Common myeloid progenitor, CD34-positive (primary cell): ENCODE measurements at regions of chr2 and their contacts with region 1.

Region 1: GRCh38 chr2:6934758-6935651 is 17.8 kb downstream of the RNF144A start:
- DNase-seq: no peak
- H3K4me3 ChIP-seq: peak overlapping the region in 3 of 7 experiments; percentile 19 to 48 (median 35)
- H3K27ac ChIP-seq: peak overlapping the region; percentile 48 to 83
- H3K4me1 ChIP-seq: peaks cover 25 to 65% (median 53%) of the 10 kb centered on the region in 4 experiments
- H3K27me3 ChIP-seq: no peaks in the 10 kb centered on the region

Region 2: GRCh38 chr2:6516674-6517073 is 418.3 kb before region 1 on chr2:
- CTCF ChIA-PET with region 1: no interaction called
- POLR2A ChIA-PET with region 1: no interaction called
- DNase-seq: no peak
- H3K4me3 ChIP-seq: no peak overlapping the region
- H3K27ac ChIP-seq: no peak overlapping the region
- H3K4me1 ChIP-seq: no peaks in the 10 kb centered on the region
- H3K27me3 ChIP-seq: peaks cover 0 to 2% (median 0%) of the 10 kb centered on the region in 5 experiments

Region 3: GRCh38 chr2:6741239-6741638 is 193.8 kb before region 1 on chr2:
- CTCF ChIA-PET with region 1: no interaction called
- POLR2A ChIA-PET with region 1: no interaction called
- DNase-seq: no peak
- H3K4me3 ChIP-seq: no peak overlapping the region
- H3K27ac ChIP-seq: no peak overlapping the region
- H3K4me1 ChIP-seq: no peaks in the 10 kb centered on the region
- H3K27me3 ChIP-seq: peaks cover 0 to 6% (median 0%) of the 10 kb centered on the region in 5 experiments

Region 4: GRCh38 chr2:6917071-6917760 is 17.8 kb before region 1 on chr2 and contains the start of gene RNF144A:
- CTCF ChIA-PET with region 1: interaction called, 31 read pairs
- POLR2A ChIA-PET with region 1: no interaction called
- DNase-seq: peak; percentile 53 to 81 (median 78)
- H3K4me3 ChIP-seq: peak within 1 kb of the TSS; percentile 64 to 87 (median 79)
- H3K27ac ChIP-seq: no peak within 1 kb of the TSS
- H3K4me1 ChIP-seq: peaks cover 2 to 32% (median 24%) of the 10 kb centered on the region in 4 experiments
- H3K27me3 ChIP-seq: no peaks in the 10 kb centered on the region

Region 5: GRCh38 chr2:6922201-6922685 is 12.8 kb before region 1 on chr2:
- CTCF ChIA-PET with region 1: interaction called, 31 read pairs
- POLR2A ChIA-PET with region 1: no interaction called
- DNase-seq: peak in 2 of 3 donors; percentile 67
- H3K4me3 ChIP-seq: no peak overlapping the region
- H3K27ac ChIP-seq: no peak overlapping the region
- H3K4me1 ChIP-seq: peaks cover 2 to 62% (median 54%) of the 10 kb centered on the region in 4 experiments
- H3K27me3 ChIP-seq: no peaks in the 10 kb centered on the region

Region 6: DNA sequence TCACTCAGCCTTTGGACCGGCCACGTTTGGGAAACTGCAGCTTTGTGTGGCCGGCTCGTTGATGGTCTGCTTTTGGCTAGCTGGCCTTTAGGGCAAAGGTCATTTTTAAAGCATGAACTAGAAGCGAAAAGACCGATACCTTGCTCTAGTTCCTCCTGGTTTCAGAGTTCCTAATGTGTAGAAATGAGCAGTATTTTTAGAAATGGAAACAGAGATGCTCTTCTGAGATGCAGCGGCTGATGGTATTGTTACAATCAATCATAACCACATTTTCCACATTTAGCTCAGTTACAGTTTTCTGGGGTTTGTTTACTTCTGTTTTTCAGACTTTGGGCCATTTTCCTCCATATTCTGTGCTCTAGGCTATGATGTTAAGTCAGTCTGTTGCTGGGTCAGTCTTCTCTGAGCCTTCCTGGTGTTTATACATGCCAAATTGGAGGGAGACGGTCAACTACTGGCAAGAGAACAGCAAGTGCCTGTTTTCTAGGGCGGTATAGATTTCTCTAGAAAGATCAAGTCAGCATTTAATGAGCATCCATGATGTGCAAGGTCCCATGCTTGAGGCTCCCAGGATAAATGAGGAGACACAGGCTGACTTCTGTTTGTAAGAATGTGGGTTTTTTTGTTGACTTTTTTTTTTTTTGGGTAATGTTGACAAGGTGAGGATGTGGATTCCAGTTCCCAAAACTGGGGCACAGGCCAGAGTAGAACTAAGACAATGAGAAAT is 10.2 kb after region 1 on chr2:
- CTCF ChIA-PET with region 1: interaction called, 13 read pairs
- POLR2A ChIA-PET with region 1: no interaction called
- DNase-seq: no peak
- H3K4me3 ChIP-seq: no peak overlapping the region
- H3K27ac ChIP-seq: no peak overlapping the region
- H3K4me1 ChIP-seq: peaks cover 6 to 20% (median 13%) of the 10 kb centered on the region in 4 experiments
- H3K27me3 ChIP-seq: no peaks in the 10 kb centered on the region

Region 7: DNA sequence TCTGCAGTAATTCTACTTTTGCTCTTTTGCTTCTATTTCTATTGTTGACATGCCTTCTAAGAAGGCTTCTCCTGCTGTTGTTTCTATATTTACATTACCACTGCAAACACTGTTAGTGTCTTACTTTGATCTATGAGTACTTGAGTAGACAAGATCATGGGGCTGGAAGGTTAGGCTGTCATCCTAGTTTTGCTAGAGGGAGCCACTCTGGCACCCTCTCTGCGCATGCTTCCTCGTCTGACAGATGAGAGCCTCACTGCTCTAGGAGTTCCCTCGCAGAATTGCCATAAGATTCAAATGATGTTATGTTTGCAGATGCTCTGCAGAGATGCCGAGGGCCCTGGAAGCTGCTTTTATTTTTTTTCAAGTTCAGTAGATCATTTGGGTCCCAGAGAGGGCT is 167.8 kb after region 1 on chr2:
- CTCF ChIA-PET with region 1: no interaction called
- POLR2A ChIA-PET with region 1: no interaction called
- DNase-seq: no peak
- H3K4me3 ChIP-seq: no peak overlapping the region
- H3K27ac ChIP-seq: no peak overlapping the region
- H3K4me1 ChIP-seq: no peaks in the 10 kb centered on the region
- H3K27me3 ChIP-seq: no peaks in the 10 kb centered on the region